ENCODE measurements at regions of chr19 and their contacts with region 1.

Region 1: DNA sequence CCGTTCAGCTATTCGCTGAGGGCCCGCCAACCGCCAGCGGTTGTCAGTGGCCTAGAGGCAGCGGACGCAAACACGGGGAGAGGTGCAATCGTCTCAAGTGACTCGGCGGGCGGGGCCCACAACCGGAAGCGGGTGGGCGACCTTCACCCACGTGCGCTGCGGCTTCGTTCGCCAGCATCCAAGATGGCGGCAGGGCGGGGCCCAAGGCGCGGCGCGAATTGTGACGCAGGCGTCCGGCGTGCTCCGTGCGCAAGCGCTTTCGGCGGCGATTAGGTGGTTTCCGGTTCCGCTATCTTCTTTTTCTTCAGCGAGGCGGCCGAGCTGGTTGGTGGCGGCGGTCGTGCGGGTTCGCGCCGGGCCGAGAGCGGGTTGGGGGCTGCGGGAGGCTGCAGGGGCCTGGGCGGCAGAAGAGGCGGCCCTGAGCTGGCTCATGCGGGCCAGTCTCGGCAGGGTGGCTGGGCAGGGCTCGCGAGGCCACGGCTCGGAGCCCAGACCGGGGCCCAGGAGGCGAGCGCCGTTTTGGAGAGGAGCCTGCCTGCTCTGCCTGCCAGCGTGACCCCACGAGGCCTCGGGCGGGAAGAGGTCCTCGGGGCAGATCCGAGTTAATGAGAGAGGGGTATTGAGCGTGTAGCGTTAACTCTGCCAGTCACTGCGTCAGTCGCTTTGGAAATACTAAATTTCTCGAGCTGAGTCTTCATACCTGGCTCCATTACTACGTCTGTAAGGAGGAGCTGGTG is at the start of gene UBA52:
- DNase-seq: peak; percentile 98 to 100 (median 99)
- ATAC-seq: peak; percentile 91
- H3K4me3 ChIP-seq: peak within 1 kb of the TSS; percentile 94 to 97
- H3K4me3 Mint-ChIP-seq: peak within 1 kb of the TSS; percentile 95
- H3K27ac ChIP-seq: peak within 1 kb of the TSS; percentile 95 to 96
- H3K27ac Mint-ChIP-seq: peak within 1 kb of the TSS; percentile 97
- H3K4me1 ChIP-seq: peaks cover 16% of the 10 kb centered on the region
- H3K4me1 Mint-ChIP-seq: peaks cover 19% of the 10 kb centered on the region
- H3K27me3 ChIP-seq: no peaks in the 10 kb centered on the region
- H3K27me3 Mint-ChIP-seq: no peaks in the 10 kb centered on the region
- CTCF ChIP-seq: no peak
- total RNA-seq, gene UBA52: 2,140 to 2,193 TPM

Region 2: DNA sequence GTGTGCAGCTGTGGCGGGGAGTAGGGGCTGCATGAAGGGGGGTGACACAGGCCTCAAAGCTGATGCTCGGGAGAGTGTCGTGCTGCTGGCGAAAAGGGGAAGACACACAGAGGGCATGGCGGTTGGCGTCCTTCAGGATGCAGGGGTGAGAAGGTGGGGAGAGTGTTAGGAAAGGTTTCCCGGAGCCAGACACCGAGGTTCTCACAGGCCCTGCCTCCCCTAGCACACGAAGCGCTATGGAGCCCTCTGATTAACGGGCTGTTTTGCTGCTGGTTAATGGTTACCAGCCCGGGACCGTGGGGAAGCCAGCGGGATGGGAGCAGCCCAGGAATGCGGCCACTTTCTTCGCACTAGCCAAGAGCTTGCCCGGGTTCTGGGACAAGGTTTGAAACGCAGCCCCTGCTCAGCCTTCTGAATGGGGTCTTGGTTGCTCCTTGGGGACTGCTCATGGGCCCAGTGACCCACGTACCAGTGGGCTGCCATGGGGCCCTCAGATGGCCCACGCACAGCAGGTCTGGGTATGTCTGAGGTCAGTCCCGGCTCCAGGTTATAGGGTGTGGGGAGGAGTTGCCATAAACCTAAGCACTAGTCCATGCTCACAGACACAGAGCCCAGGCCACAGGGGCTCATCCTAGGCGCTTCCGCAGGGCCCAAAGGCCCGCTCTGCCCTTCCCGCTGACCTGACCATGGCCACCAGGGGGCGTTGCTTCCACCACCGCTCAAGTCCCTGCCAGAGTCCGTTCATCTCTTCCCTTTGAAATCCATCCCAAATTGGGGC is 102.5 kb before region 1 on chr19:
- CTCF ChIA-PET with region 1: no interaction called
- POLR2A ChIA-PET with region 1: no interaction called
- intact Hi-C with region 1: loop called in 1 of 2 experiments (anchors 5 kb)
- DNase-seq: peak; percentile 24 to 77 (median 62)
- ATAC-seq: peak; percentile 55
- H3K4me3 ChIP-seq: no peak overlapping the region
- H3K4me3 Mint-ChIP-seq: no peak overlapping the region
- H3K27ac ChIP-seq: no peak overlapping the region
- H3K27ac Mint-ChIP-seq: no peak overlapping the region
- H3K4me1 ChIP-seq: peaks cover 13% of the 10 kb centered on the region
- H3K4me1 Mint-ChIP-seq: peaks cover 21% of the 10 kb centered on the region
- H3K27me3 ChIP-seq: no peaks in the 10 kb centered on the region
- H3K27me3 Mint-ChIP-seq: no peaks in the 10 kb centered on the region
- CTCF ChIP-seq: peak; percentile 56

Region 3: GRCh38 chr19:18557474-18558201 is 14.1 kb before region 1 on chr19 and contains the start of gene KXD1:
- CTCF ChIA-PET with region 1: interaction called, 6 read pairs
- POLR2A ChIA-PET with region 1: interaction called, 24 read pairs
- intact Hi-C with region 1: loop called (anchors 1 kb)
- DNase-seq: peak; percentile 92 to 100 (median 97)
- ATAC-seq: peak; percentile 99
- H3K4me3 ChIP-seq: peak within 1 kb of the TSS; percentile 98 to 99
- H3K4me3 Mint-ChIP-seq: peak within 1 kb of the TSS; percentile 91
- H3K27ac ChIP-seq: peak within 1 kb of the TSS; percentile 96 to 99
- H3K27ac Mint-ChIP-seq: peak within 1 kb of the TSS; percentile 90
- H3K4me1 ChIP-seq: peaks cover 20% of the 10 kb centered on the region
- H3K4me1 Mint-ChIP-seq: peaks cover 20% of the 10 kb centered on the region
- H3K27me3 ChIP-seq: no peaks in the 10 kb centered on the region
- H3K27me3 Mint-ChIP-seq: no peaks in the 10 kb centered on the region
- CTCF ChIP-seq: no peak
- total RNA-seq, gene KXD1: 64.1 to 76.1 TPM

Region 4: GRCh38 chr19:18846862-18847548 is 275.3 kb after region 1 on chr19:
- CTCF ChIA-PET with region 1: interaction called, 10 read pairs
- POLR2A ChIA-PET with region 1: no interaction called
- intact Hi-C with region 1: no loop called
- DNase-seq: peak; percentile 37 to 81 (median 73)
- ATAC-seq: peak; percentile 65
- H3K4me3 ChIP-seq: no peak overlapping the region
- H3K4me3 Mint-ChIP-seq: peak overlapping the region; percentile 36
- H3K27ac ChIP-seq: no peak overlapping the region
- H3K27ac Mint-ChIP-seq: no peak overlapping the region
- H3K4me1 ChIP-seq: peaks cover 40% of the 10 kb centered on the region
- H3K4me1 Mint-ChIP-seq: peaks cover 56% of the 10 kb centered on the region
- H3K27me3 ChIP-seq: no peaks in the 10 kb centered on the region
- H3K27me3 Mint-ChIP-seq: no peaks in the 10 kb centered on the region
- CTCF ChIP-seq: peak; percentile 78